A549 (cell line): ENCODE measurements at regions of chr6 and their contacts with region 1.

Region 1: DNA sequence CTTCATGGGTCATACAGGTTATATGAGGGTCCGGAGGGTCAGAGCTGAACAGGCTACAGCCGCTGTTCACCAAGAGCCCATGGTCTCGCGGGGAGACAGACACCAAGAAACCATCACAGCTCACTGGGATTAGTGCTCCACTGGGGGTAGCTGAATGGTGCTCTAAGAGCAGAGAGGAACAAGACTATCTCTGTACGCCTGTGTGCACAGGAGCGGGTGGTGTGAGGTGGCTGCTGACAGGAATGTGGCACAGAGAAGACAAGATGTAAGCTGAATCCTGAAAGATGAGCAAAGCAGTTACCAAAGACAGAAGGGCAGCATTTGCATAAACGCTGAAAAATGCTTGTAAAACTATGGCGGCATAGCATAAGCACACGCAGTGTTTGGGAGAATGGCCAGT is 139.1 kb downstream of the GMPR start:
- DNase-seq: no peak
- ATAC-seq: no peak
- H3K4me3 ChIP-seq: no peak overlapping the region
- H3K27ac ChIP-seq: no peak overlapping the region
- H3K4me1 ChIP-seq: no peaks in the 10 kb centered on the region
- CTCF ChIP-seq: no peak
- EP300 ChIP-seq: no peak
- POLR2A ChIP-seq: no peak
- RAD21 ChIP-seq: no peak

Region 2: DNA sequence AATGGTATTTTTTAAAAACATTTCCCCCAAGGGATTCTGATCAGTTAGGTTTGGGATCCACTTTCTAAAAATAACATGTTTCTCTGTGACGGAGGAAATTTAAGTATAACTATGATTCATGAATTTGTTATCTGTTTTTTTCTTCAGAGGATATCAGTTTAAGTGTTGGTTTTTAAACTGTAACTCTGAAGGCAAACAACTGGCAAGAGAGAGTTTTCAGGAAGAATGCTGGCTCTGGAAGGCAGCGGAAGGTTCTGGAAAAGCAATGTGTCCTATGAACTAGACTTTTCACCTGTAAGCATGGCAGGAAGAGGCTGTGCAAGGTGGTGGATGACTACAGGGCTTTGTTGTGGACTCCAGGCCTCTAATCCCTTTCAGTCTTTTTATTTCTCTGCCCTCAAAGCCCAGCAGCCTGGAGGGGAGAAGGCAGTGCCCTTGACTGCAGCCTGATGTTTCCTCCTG is 14.0 kb after region 1 on chr6:
- CTCF ChIA-PET with region 1: interaction called, 3 read pairs
- POLR2A ChIA-PET with region 1: interaction called, 13 read pairs
- DNase-seq: no peak
- ATAC-seq: no peak
- H3K4me3 ChIP-seq: no peak overlapping the region
- H3K27ac ChIP-seq: 0 out of 6 replicates have a peak overlapping the region, but pooled peaks of 1 of the 2 experiments have one; percentile 35
- H3K4me1 ChIP-seq: no peaks in the 10 kb centered on the region
- CTCF ChIP-seq: no peak
- EP300 ChIP-seq: no peak
- POLR2A ChIP-seq: no peak
- RAD21 ChIP-seq: no peak

Region 3: GRCh38 chr6:16403831-16404230 is 26.4 kb after region 1 on chr6:
- CTCF ChIA-PET with region 1: no interaction called
- POLR2A ChIA-PET with region 1: no interaction called
- DNase-seq: no peak
- ATAC-seq: no peak
- H3K4me3 ChIP-seq: no peak overlapping the region
- H3K27ac ChIP-seq: no peak overlapping the region
- H3K4me1 ChIP-seq: no peaks in the 10 kb centered on the region
- CTCF ChIP-seq: peak; percentile 38
- EP300 ChIP-seq: no peak
- POLR2A ChIP-seq: no peak
- RAD21 ChIP-seq: peak; percentile 17 to 40; a peak in 2 of 5 replicates